Activated naive CD8-positive, alpha-beta T cell treated with anti-CD3 and anti-CD28 coated beads, Interleukin-2, amount 10 ng/mL, durations not matched to agents 7 days and 5 days (primary cell): ENCODE measurements at regions of chr2 and their contacts with region 1.

Region 1: DNA sequence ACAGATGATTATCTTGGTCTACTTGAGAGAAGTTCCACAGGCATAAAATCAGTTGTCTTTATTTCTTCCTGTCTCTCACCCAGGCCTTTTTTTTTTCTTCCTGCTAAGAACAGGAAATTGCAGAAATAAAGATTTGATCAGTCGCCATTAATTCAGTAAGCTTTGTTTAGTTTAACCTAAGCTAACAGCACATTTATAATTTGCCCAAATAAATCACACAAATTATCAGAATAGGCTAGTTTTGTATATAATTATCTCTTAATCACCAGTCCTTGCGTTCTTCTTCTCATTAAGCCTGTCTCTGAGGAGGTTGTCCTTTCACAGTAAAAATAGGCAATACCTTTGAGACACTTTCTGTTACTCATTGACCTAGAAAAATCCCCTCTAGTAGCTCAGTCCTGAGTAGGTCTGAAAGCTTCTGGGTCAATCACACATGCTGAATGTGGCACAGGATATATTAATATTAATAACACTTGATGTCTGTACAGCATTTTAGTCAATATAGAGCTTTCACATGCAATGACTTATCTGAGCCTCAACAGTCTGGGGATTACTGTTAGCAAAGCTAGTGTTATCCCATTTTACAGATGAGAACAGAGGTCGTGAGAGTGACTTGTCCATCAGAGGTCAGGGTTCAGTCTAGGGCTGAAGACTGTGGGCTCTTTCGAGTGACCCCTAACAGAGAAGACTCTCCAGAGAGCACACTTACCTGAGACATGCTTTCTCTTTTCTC is 11.2 kb upstream of the STK17B start:
- DNase-seq: no peak
- ATAC-seq: peak; percentile 10
- H3K4me3 Mint-ChIP-seq: peak overlapping the region; percentile 84
- H3K27ac Mint-ChIP-seq: peak overlapping the region; percentile 96
- H3K4me1 Mint-ChIP-seq: peaks cover 62% of the 10 kb centered on the region
- H3K27me3 Mint-ChIP-seq: no peaks in the 10 kb centered on the region

Region 2: DNA sequence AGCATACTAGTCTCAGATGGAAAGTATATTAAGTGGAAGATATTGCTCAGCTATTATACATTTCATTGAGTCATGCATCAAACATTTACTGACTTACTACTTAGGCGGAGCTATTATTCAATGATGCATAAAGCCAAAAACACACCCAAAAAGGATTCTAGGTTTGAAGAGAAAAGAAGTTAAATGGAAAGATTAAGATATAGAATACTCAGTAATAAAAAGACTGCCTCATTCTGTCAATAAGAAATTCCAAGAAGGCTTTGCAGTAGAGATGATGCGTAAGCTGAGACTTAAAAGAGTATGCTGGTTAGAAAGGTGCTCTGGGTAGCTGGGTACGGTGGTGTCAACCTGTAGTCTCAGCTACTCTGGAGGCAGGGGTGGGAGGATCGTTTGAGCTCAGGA is 38.9 kb before region 1 on chr2:
- POLR2A ChIA-PET with region 1: no interaction called
- DNase-seq: no peak
- ATAC-seq: no peak
- H3K4me3 Mint-ChIP-seq: peak overlapping the region; percentile 64
- H3K27ac Mint-ChIP-seq: peak overlapping the region; percentile 77
- H3K4me1 Mint-ChIP-seq: peaks cover 72% of the 10 kb centered on the region
- H3K27me3 Mint-ChIP-seq: no peaks in the 10 kb centered on the region

Region 3: DNA sequence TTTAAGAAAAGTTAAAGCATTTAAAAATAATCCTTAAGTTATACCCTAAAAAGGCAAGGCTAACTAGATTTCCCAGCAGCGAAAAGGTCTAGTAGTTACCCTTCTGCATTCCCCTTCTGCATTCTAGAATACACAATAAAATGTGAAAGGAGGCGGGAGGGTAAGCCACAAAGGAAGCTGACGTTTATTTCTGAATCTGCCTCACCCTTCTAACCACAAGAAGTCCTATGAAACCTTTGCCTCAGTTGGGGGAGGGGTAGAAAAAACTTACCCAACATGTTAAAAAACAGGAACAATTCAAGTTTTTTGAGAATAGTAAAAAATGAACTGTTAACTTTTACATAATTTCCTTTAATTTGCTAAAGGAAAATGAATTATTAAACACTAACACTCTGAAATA is 22.5 kb before region 1 on chr2:
- POLR2A ChIA-PET with region 1: interaction called, 14 read pairs
- DNase-seq: no peak
- ATAC-seq: peak; percentile 20
- H3K4me3 Mint-ChIP-seq: peak overlapping the region; percentile 89
- H3K27ac Mint-ChIP-seq: peak overlapping the region; percentile 92
- H3K4me1 Mint-ChIP-seq: peaks cover 60% of the 10 kb centered on the region
- H3K27me3 Mint-ChIP-seq: no peaks in the 10 kb centered on the region

Region 4: GRCh38 chr2:196205881-196206435 is 23.4 kb after region 1 on chr2:
- POLR2A ChIA-PET with region 1: interaction called, 84 read pairs
- DNase-seq: no peak
- ATAC-seq: no peak
- H3K4me3 Mint-ChIP-seq: no peak overlapping the region
- H3K27ac Mint-ChIP-seq: no peak overlapping the region
- H3K4me1 Mint-ChIP-seq: peaks cover 30% of the 10 kb centered on the region
- H3K27me3 Mint-ChIP-seq: no peaks in the 10 kb centered on the region

Region 5: DNA sequence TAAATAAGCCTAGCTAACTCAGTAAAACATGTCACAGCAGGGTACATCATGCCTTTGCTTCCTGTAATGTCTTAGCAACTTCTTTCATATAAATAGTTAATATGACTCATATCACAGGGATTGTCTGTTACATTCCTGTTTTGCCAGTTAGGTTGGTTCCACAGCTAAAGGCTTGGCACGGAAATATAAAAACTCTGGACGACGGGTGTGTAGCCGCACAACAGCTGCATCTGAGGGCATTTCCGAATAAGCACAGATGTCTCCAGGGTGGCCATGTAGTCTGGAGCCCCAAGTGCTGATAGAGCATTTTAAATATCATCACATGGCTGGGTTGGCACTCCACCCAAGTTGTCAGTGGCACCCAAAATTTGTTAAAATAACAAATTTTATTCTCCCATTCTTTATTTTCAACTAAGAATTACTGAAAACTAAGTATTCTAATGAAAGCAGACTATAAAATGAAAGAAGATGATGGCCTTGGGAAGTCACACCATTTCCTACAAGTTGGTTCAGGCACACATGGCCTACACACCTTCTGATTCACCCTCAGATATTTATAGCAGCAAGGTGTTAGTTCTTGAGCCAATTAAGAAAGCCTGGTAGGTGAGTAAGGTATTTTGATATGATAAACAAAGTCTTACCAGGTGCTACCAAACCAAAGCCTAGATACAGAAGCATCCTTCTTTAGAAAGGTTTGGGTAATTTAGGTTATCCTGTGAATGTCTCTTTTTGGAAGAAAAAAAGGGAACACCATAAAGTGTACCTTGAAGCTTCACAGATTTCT is 50.6 kb after region 1 on chr2:
- POLR2A ChIA-PET with region 1: interaction called, 169 read pairs
- DNase-seq: no peak
- ATAC-seq: no peak
- H3K4me3 Mint-ChIP-seq: peak overlapping the region; percentile 55
- H3K27ac Mint-ChIP-seq: peak overlapping the region; percentile 88
- H3K4me1 Mint-ChIP-seq: peaks cover 82% of the 10 kb centered on the region
- H3K27me3 Mint-ChIP-seq: no peaks in the 10 kb centered on the region

Region 6: DNA sequence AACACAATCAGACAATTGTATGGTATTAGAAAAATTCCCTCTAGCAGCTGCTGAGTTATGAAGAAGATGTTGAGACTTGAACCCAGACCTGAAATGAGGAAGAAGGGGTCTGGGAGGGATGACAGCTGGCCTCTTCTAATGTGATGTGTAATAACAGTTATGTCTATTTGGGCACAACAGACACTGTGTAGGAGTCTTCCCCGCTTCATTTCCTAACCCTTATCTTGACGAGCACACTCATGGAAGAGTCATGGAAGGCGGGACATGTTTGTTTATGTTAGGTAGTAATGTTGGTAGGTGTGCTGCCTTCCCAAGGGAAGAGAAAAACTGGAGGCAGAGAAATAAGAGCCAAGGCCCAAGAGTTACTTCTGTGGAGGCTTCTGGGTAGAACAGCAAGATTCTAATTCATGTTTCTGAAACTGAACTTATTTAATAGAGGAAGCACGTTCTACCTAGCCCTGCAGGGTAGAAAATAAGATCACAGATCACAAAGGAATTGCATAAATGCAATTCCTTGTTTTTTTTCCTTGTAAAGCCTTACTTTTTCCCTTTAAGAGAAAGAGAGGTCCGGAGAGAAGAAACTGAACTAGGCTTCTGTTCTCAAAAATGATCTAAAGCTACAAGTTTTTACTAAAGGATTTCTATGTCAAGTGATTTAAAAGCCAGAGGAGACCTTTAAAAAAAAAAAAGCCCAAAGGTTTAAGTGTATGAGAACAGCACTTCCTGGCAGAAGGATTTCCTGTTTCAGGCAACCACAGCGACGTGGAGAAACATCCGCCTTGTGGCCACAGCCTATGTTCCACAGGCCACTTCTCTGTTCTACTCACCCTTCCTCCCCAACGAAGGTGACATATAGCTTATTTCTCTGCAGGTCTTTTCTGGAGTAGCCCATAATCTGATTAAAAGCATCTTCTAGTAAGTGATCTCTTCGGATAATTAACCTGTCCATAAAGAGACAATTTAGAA is 57.3 kb after region 1 on chr2:
- POLR2A ChIA-PET with region 1: interaction called, 169 read pairs
- DNase-seq: peak; percentile 80
- ATAC-seq: peak; percentile 62
- H3K4me3 Mint-ChIP-seq: peak overlapping the region; percentile 78
- H3K27ac Mint-ChIP-seq: peak overlapping the region; percentile 93
- H3K4me1 Mint-ChIP-seq: peaks cover 70% of the 10 kb centered on the region
- H3K27me3 Mint-ChIP-seq: no peaks in the 10 kb centered on the region

Region 7: GRCh38 chr2:196322973-196323810 is 140.6 kb after region 1 on chr2:
- POLR2A ChIA-PET with region 1: no interaction called
- DNase-seq: no peak
- ATAC-seq: no peak
- H3K4me3 Mint-ChIP-seq: no peak overlapping the region
- H3K27ac Mint-ChIP-seq: no peak overlapping the region
- H3K4me1 Mint-ChIP-seq: no peaks in the 10 kb centered on the region
- H3K27me3 Mint-ChIP-seq: peaks cover 11% of the 10 kb centered on the region